Mammary epithelial cell (primary cell): ENCODE measurements at regions of chr11 and their contacts with region 1.

Region 1: GRCh38 chr11:60899046-60899936 is 7.1 kb downstream of the PRPF19 start:
- DNase-seq: peak; percentile 51
- H3K4me3 ChIP-seq: no peak overlapping the region
- H3K27ac ChIP-seq: no peak overlapping the region
- H3K4me1 ChIP-seq: no peaks in the 10 kb centered on the region
- H3K27me3 ChIP-seq: no peaks in the 10 kb centered on the region
- CTCF ChIP-seq: peak; percentile 94 to 99

Region 2: DNA sequence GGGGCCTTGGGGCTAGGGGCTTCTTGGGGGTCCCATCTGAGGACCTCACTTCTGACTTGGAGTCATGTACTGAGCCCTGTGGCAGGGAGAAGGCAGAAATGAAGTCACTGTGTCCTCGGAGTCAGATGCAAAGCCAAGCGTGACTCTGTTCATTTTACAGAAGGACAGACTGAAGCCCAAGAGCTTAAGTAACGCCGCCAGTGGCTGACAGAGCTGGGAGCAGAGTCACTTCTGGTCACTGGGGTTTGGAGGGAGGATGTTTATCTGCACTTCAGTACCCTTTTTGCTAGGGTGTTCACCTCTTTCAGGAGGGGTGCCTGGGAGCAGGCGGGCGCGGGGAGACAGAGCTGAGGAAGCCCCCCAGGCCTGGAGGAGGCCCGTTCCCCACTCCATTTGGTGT is 82.9 kb after region 1 on chr11:
- CTCF ChIA-PET with region 1: interaction called, 12 read pairs
- dilution Hi-C with region 1: no loop called
- in situ Hi-C with region 1: no loop called
- intact Hi-C with region 1: no loop called
- DNase-seq: no peak
- H3K4me3 ChIP-seq: no peak overlapping the region
- H3K27ac ChIP-seq: no peak overlapping the region
- H3K4me1 ChIP-seq: peaks cover 23% of the 10 kb centered on the region
- H3K27me3 ChIP-seq: no peaks in the 10 kb centered on the region
- CTCF ChIP-seq: no peak